ENCODE measurements at regions of chr7 and their contacts with region 1.

Region 1: GRCh38 chr7:106100863-106101629 is 11.1 kb downstream of the SYPL1 start:
- DNase-seq: no peak
- ATAC-seq: peak; percentile 8; the same call in 1 of the 3 replicates
- H3K4me3 ChIP-seq: 0 out of 2 replicates have a peak overlapping the region, but pooled peaks have one; percentile 9
- H3K27ac ChIP-seq: no peak overlapping the region
- H3K4me1 ChIP-seq: peaks cover 16% of the 10 kb centered on the region
- H3K27me3 ChIP-seq: no peaks in the 10 kb centered on the region
- CTCF ChIP-seq: no peak
- EP300 ChIP-seq: no peak
- POLR2A ChIP-seq: no peak
- RAD21 ChIP-seq: no peak

Region 2: GRCh38 chr7:105776058-105776751 is 324.8 kb before region 1 on chr7:
- CTCF ChIA-PET with region 1: no interaction called
- POLR2A ChIA-PET with region 1: no interaction called
- RAD21 ChIA-PET with region 1: no interaction called
- SMC1A ChIA-PET with region 1: no interaction called
- in situ Hi-C with region 1: no loop called
- intact Hi-C with region 1: no loop called
- DNase-seq: no peak
- ATAC-seq: no peak
- H3K4me3 ChIP-seq: no peak overlapping the region
- H3K27ac ChIP-seq: no peak overlapping the region
- H3K4me1 ChIP-seq: no peaks in the 10 kb centered on the region
- H3K27me3 ChIP-seq: peaks cover 0 to 4% of the 10 kb centered on the region in 2 experiments; a peak in 1 of 4 replicates
- CTCF ChIP-seq: no peak
- EP300 ChIP-seq: no peak
- POLR2A ChIP-seq: no peak
- RAD21 ChIP-seq: no peak

Region 3: GRCh38 chr7:106089647-106090046 is 11.4 kb before region 1 on chr7:
- CTCF ChIA-PET with region 1: interaction called, 13 read pairs
- POLR2A ChIA-PET with region 1: interaction called, 4 read pairs
- RAD21 ChIA-PET with region 1: interaction called, 6 read pairs
- SMC1A ChIA-PET with region 1: interaction called, 18 read pairs
- in situ Hi-C with region 1: no loop called
- intact Hi-C with region 1: no loop called
- DNase-seq: peak; percentile 28
- ATAC-seq: peak; percentile 95
- H3K4me3 ChIP-seq: no peak overlapping the region; the same call in 1 of the 2 replicates
- H3K27ac ChIP-seq: peak overlapping the region; percentile 32; the same call in 1 of the 2 replicates
- H3K4me1 ChIP-seq: peaks cover 17% of the 10 kb centered on the region
- H3K27me3 ChIP-seq: no peaks in the 10 kb centered on the region
- CTCF ChIP-seq: no peak
- EP300 ChIP-seq: peak in 1 of 2 experiments; percentile 56; a peak in 1 of 4 replicates
- POLR2A ChIP-seq: no peak
- RAD21 ChIP-seq: no peak

Region 4: GRCh38 chr7:106112117-106112971 is 11.3 kb after region 1 on chr7 and contains the start of gene SYPL1:
- CTCF ChIA-PET with region 1: interaction called, 4 read pairs
- POLR2A ChIA-PET with region 1: interaction called, 7 read pairs
- RAD21 ChIA-PET with region 1: interaction called, 4 read pairs
- SMC1A ChIA-PET with region 1: interaction called, 14 read pairs
- in situ Hi-C with region 1: no loop called
- intact Hi-C with region 1: no loop called
- DNase-seq: peak; percentile 66
- ATAC-seq: peak; percentile 88
- H3K4me3 ChIP-seq: peak within 1 kb of the TSS; percentile 83
- H3K27ac ChIP-seq: peak within 1 kb of the TSS; percentile 94
- H3K4me1 ChIP-seq: peaks cover 19% of the 10 kb centered on the region
- H3K27me3 ChIP-seq: no peaks in the 10 kb centered on the region
- CTCF ChIP-seq: peak in 2 of 3 experiments; percentile 5 to 7; a peak in 1 of 6 replicates
- EP300 ChIP-seq: 0 out of 4 replicates have a peak, but pooled peaks of 1 of the 2 experiments have one; percentile 29
- POLR2A ChIP-seq: peak; percentile 91
- RAD21 ChIP-seq: no peak
- polyA plus RNA-seq, gene SYPL1: 109 to 177 TPM